ENCODE measurements at regions of chr2 and their contacts with region 1.

Region 1: GRCh38 chr2:113986762-113987290 is 96.9 kb downstream of the ACTR3 start:
- DNase-seq: no peak
- H3K4me3 ChIP-seq: no peak overlapping the region
- H3K4me3 Mint-ChIP-seq: no peak overlapping the region
- H3K27ac Mint-ChIP-seq: no peak overlapping the region
- H3K4me1 ChIP-seq: no peaks in the 10 kb centered on the region; the same call in 1 of the 2 replicates
- H3K4me1 Mint-ChIP-seq: no peaks in the 10 kb centered on the region
- H3K27me3 ChIP-seq: no peaks in the 10 kb centered on the region
- H3K27me3 Mint-ChIP-seq: no peaks in the 10 kb centered on the region
- CTCF ChIP-seq: no peak

Region 2: GRCh38 chr2:114076961-114077360 is 90.1 kb after region 1 on chr2:
- CTCF ChIA-PET with region 1: no interaction called
- POLR2A ChIA-PET with region 1: no interaction called
- intact Hi-C with region 1: loop called (anchors 5 kb)
- DNase-seq: peak in 1 of 2 experiments; percentile 20
- H3K4me3 ChIP-seq: no peak overlapping the region
- H3K4me3 Mint-ChIP-seq: peak overlapping the region; percentile 10
- H3K27ac Mint-ChIP-seq: no peak overlapping the region
- H3K4me1 ChIP-seq: no peaks in the 10 kb centered on the region
- H3K4me1 Mint-ChIP-seq: peaks cover 7% of the 10 kb centered on the region
- H3K27me3 ChIP-seq: no peaks in the 10 kb centered on the region
- H3K27me3 Mint-ChIP-seq: peaks cover 3% of the 10 kb centered on the region
- CTCF ChIP-seq: no peak

Measured in Caco-2 (cell line).